ENCODE measurements at regions of chr13 and their contacts with region 1.

Region 1: DNA sequence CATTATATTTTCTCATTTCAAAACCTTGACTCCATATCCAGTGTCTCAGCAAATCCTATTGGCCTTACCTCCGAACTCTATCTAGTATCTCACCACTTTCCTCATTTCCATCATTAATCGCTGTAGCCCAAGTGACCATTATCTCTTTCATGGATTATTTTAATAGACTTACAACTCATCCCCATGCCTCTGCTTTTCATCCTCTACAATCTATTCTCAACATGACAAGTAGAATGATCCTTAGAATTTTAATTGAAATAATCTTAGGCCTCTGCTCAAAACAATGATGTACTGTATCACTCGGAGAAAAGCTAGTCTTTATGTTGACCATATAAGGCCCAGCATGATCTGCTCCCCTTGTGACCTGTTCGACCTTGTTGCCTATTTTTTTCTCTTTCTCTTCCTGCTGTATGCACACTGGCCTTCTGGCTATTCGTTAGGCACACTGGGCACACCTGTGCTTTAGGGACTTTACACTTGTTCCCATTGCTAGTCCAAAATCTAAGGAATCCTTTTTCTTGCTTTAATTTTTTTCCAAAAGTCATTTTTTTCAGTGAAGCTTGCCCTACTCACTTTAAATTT is 21.4 kb downstream of the DNAJC15 start:
- DNase-seq: no peak
- H3K4me3 Mint-ChIP-seq: peak overlapping the region; percentile 38
- H3K27ac Mint-ChIP-seq: peak overlapping the region; percentile 88
- H3K4me1 Mint-ChIP-seq: peaks cover 72% of the 10 kb centered on the region
- H3K27me3 Mint-ChIP-seq: no peaks in the 10 kb centered on the region

Region 2: GRCh38 chr13:43023289-43023951 is 21.4 kb before region 1 on chr13 and contains the start of gene DNAJC15:
- CTCF ChIA-PET with region 1: interaction called, 11 read pairs
- POLR2A ChIA-PET with region 1: no interaction called
- DNase-seq: peak; percentile 84
- H3K4me3 Mint-ChIP-seq: peak within 1 kb of the TSS; percentile 88
- H3K27ac Mint-ChIP-seq: peak within 1 kb of the TSS; percentile 95
- H3K4me1 Mint-ChIP-seq: peaks cover 29% of the 10 kb centered on the region
- H3K27me3 Mint-ChIP-seq: no peaks in the 10 kb centered on the region
- total RNA-seq, gene DNAJC15: 12.5 to 18.5 TPM

Measured in activated CD4-positive, alpha-beta T cell treated with anti-CD3 and anti-CD28 coated beads, Interleukin-2, amount 10 ng/mL, durations not matched to agents 7 days and 5 days (primary cell).